Left cardiac atrium (tissue), 4 donors: ENCODE measurements at regions of chr6 and their contacts with region 1.

Region 1: DNA sequence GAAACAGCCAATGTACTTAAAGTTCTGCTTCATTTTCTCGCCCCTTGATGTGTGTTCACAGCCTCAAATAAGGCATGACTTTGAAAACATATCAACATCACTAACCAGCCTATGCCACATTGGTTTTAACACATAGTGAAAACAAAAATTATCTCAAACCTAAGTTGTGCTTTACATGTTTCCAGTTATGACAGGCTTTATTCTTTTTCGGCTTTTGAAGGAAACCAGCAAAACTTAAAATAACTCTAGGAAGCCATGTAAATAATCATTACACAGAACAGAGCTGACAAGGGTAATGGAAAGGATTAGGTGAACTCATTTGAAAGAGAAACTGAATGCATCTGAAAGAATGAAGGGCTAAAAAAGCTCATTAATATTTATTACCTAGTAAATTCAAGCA is 42.1 kb downstream of the BMP5 start:
- DNase-seq: no peak
- ATAC-seq: no peak

Region 2: DNA sequence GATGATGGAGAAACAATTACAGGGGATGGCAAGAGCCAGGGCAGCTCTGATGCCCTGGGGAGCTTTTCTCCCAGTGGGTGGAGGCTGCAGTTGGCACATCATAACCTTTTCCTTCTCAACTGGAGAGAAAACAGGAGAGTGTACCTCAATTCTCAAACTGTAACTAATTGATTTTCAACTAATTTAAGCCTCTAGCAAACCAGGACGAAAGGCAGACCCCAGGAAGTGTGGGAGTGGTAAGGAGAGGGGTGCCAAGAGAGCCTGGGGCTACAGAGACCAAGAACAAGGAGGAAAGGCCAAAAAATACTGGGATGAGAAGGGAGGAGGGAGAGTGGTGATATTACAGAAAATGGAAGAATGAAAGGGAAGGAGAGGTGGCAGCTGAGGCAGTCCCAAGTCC is 36.4 kb after region 1 on chr6:
- intact Hi-C with region 1: loop called in 1 of 2 experiments (anchors 5 kb)
- DNase-seq: no peak
- ATAC-seq: peak in 1 of 2 donors; percentile 44

Region 3: DNA sequence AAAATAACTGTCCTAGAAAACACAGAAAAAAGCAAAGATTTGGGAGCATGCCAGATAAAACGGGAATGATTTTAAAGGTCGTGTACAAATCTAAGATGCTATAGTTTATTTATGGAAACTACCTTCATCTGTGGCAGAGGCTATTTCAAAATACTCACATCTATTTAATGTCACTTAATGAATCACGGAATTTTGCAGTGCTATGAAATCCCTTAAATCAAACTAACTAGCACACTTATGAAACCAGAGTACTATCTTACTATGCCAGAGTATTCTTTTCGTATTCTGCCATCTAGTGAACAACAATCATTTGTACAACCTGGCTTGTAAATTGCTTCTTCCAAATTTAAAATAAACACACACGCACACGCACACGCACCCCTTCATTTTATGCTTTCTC is 120.1 kb after region 1 on chr6:
- intact Hi-C with region 1: no loop called
- DNase-seq: no peak
- ATAC-seq: peak; percentile 71 to 77